Activated CD8-positive, alpha-beta T cell treated with anti-CD3 and anti-CD28 coated beads, Interleukin-2, amount 10 ng/mL, durations not matched to agents 7 days and 5 days (primary cell): ENCODE measurements at regions of chr4 and their contacts with region 1.

Region 1: DNA sequence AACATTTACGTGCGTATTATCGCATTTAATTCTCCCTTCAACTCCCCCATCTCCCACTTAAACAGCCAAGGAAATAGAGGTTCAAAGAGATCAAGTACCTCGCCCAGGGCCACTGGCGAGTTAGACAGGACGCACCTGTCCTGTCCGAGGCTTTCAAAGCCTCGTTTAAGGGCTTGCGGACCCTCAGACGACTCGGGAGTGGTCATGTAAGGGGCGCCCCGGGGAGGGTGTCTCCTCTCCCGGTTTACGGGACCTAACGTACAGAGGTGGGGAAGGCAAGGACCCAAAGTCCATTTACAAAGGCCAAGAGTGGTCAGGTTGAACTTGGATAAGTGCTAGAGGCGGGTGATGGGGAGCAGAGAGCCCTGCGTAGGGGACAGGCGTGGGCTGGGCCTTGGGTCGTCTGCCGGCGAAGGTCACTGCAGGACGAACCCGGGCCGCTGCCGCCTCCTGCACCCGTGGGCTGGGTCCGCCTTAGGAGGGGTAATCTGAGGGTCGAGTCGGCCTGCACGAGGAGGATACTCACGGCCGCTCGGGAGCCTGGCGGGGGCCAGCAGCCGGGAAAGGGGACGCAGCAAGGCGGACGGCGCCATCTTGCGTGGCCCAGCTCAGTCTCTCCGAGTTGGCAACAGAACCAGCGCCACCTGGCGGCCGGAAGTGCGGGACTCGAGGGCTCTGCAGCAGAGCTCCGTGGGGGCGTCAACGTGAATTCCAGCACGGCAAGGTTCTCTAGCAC is 5.9 kb upstream of the NAA15 start:
- DNase-seq: peak; percentile 97
- ATAC-seq: peak; percentile 98
- H3K4me3 Mint-ChIP-seq: peak overlapping the region; percentile 94
- H3K27ac Mint-ChIP-seq: peak overlapping the region; percentile 96
- H3K4me1 Mint-ChIP-seq: peaks cover 40% of the 10 kb centered on the region
- H3K27me3 Mint-ChIP-seq: no peaks in the 10 kb centered on the region

Region 2: DNA sequence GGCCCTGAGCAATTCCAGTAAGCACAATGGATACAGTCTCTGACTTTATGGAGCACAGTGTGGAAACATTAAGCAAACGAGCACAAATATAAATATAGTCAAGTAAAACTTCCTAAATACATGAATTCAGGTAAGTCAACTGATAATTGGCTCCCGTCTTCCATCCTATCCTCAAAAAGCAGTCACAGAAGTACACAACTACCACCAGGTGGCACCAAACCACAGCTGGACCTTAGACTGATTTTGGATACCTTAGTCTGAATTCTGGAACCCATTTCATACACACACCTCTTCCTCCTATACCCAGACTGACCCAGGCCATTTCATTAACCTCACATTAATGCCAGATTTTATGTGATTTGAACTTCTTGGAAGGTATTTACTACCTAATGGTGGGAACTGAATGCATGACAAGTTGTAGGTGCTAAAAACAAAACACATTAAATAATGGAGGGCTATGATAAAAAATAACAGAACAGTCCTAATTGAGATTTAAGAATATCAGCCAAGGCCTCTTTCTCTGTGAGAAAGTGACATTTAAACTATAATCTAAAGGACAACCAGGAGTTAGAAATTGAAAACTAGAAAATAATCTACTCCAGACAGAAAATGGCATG is 195.9 kb before region 1 on chr4:
- CTCF ChIA-PET with region 1: interaction called, 28 read pairs
- POLR2A ChIA-PET with region 1: no interaction called
- DNase-seq: peak; percentile 82
- ATAC-seq: peak; percentile 65
- H3K4me3 Mint-ChIP-seq: no peak overlapping the region
- H3K27ac Mint-ChIP-seq: no peak overlapping the region
- H3K4me1 Mint-ChIP-seq: no peaks in the 10 kb centered on the region
- H3K27me3 Mint-ChIP-seq: no peaks in the 10 kb centered on the region

Region 3: GRCh38 chr4:139223682-139224317 is 71.6 kb before region 1 on chr4:
- CTCF ChIA-PET with region 1: interaction called, 28 read pairs
- POLR2A ChIA-PET with region 1: interaction called, 3 read pairs
- DNase-seq: no peak
- ATAC-seq: no peak
- H3K4me3 Mint-ChIP-seq: no peak overlapping the region
- H3K27ac Mint-ChIP-seq: no peak overlapping the region
- H3K4me1 Mint-ChIP-seq: peaks cover 16% of the 10 kb centered on the region
- H3K27me3 Mint-ChIP-seq: no peaks in the 10 kb centered on the region

Region 4: DNA sequence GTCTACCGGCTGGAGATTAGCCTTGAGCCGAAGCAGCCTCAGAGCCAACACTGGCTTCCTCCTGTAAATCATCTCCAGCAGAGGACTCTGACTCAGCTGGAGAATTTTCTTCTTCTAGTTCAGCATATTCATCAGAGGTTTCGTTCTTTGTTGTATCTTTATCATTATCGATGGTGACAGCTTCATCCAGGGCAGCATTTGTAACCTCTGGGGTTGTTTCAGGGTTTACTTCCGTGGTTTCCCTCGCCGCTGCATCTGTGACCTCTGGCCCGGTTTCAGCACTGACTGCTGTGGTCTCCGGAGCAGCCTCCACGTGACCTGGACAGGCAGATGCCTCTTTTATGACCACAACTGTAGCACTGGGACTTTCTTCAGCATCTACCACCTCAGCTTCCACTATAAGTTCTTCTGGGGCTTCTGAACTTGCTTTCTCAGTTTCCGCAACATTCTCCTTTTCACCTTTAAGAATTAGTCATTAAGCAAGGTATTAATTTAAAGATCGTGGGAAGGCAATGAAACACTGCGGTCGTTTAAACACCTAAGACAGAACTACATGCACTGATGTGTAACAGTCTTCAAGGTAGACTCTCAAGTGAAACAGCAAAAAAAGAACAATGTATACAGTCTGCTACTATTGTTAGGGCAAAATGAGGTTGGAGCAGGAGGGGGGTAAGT is 28.7 kb before region 1 on chr4:
- CTCF ChIA-PET with region 1: interaction called, 25 read pairs
- POLR2A ChIA-PET with region 1: interaction called, 8 read pairs
- DNase-seq: peak; percentile 86
- ATAC-seq: peak; percentile 99
- H3K4me3 Mint-ChIP-seq: peak overlapping the region; percentile 61
- H3K27ac Mint-ChIP-seq: peak overlapping the region; percentile 55
- H3K4me1 Mint-ChIP-seq: peaks cover 26% of the 10 kb centered on the region
- H3K27me3 Mint-ChIP-seq: peaks cover 10% of the 10 kb centered on the region

Region 5: DNA sequence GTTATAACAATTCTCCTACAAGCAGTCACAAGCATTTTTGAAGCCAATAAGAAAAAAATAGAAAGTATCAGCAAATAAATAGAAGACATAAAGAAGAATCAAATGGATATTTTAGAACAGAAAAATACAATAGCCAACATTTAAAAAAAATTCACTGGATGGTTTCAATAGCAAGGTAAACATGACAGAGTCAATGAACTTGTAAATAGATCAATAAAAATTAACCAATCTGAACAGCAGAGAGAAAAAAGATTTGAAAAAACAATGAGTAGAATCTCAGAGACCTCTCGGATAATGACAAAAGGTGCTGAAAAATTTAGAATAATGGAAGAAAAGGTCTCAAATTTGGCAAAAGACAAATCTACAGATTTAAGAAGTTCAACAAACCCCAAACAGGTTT is 125.3 kb after region 1 on chr4:
- CTCF ChIA-PET with region 1: no interaction called
- POLR2A ChIA-PET with region 1: no interaction called
- DNase-seq: no peak
- ATAC-seq: no peak
- H3K4me3 Mint-ChIP-seq: no peak overlapping the region
- H3K27ac Mint-ChIP-seq: no peak overlapping the region
- H3K4me1 Mint-ChIP-seq: peaks cover 15% of the 10 kb centered on the region
- H3K27me3 Mint-ChIP-seq: no peaks in the 10 kb centered on the region

Region 6: GRCh38 chr4:139682741-139683151 is 387.4 kb after region 1 on chr4:
- CTCF ChIA-PET with region 1: no interaction called
- POLR2A ChIA-PET with region 1: no interaction called
- DNase-seq: no peak
- ATAC-seq: no peak
- H3K4me3 Mint-ChIP-seq: no peak overlapping the region
- H3K27ac Mint-ChIP-seq: no peak overlapping the region
- H3K4me1 Mint-ChIP-seq: peaks cover 16% of the 10 kb centered on the region
- H3K27me3 Mint-ChIP-seq: peaks cover 3% of the 10 kb centered on the region